Body of pancreas (tissue), 4 donors: ENCODE measurements at regions of chr15 and their contacts with region 1.

Region 1: GRCh38 chr15:84035399-84035766 is 200.2 kb upstream of the GOLGA6L4 start:
- DNase-seq: no peak
- ATAC-seq: peak; percentile 80
- H3K4me3 ChIP-seq: no peak overlapping the region
- H3K27ac ChIP-seq: no peak overlapping the region
- H3K4me1 ChIP-seq: peaks cover 11% of the 10 kb centered on the region
- H3K27me3 ChIP-seq: no peaks in the 10 kb centered on the region
- CTCF ChIP-seq: peak; percentile 9 to 59 (median 47)
- POLR2A ChIP-seq: no peak

Region 2: DNA sequence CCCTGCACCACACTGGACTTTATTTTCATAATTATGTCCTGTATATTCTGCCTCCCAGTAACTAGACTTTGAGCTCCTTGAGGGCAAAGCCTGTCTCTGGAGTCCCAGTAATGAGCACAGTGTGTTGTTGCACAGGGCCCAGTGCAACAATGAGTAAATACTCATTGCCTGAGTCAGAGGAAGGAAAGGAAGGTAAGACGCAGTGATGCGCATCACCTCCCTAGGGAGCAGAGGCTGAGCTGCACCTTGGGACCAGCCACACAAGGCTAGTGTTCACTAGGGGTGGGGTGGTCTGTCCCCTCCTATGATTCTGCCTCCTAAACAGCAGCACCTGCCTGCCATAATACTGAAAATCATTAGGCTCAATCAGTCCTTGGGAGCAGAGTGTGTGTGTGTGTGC is 468.1 kb before region 1 on chr15:
- intact Hi-C with region 1: loop called (anchors 5 kb)
- DNase-seq: no peak
- ATAC-seq: no peak
- H3K4me3 ChIP-seq: no peak overlapping the region
- H3K27ac ChIP-seq: no peak overlapping the region
- H3K4me1 ChIP-seq: no peaks in the 10 kb centered on the region
- H3K27me3 ChIP-seq: no peaks in the 10 kb centered on the region
- CTCF ChIP-seq: no peak
- POLR2A ChIP-seq: no peak